Posterior vena cava (tissue), 2 donors: ENCODE measurements at regions of chr9 and their contacts with region 1.

Region 1: DNA sequence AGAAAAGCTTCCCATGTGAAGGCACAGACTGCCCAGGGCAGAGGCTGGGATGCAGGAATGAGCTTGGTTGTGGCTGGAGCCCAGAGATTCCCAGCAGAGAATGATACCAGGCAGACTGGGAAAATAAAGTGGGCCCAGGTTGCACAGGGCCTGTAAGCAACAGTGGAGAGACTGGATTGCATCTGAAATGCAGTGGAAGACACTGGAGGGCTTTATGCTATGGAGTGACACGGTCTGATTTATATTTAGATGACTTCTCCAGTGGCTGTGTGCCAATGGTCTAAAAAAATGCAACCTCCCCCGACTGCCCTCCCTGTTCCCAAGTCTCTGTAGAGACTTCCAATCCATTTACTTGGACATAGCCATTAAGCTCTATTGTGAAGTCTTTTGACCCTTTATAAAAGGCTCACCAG is 951.1 kb upstream of the DMAC1 start:
- DNase-seq: no peak

Region 2: DNA sequence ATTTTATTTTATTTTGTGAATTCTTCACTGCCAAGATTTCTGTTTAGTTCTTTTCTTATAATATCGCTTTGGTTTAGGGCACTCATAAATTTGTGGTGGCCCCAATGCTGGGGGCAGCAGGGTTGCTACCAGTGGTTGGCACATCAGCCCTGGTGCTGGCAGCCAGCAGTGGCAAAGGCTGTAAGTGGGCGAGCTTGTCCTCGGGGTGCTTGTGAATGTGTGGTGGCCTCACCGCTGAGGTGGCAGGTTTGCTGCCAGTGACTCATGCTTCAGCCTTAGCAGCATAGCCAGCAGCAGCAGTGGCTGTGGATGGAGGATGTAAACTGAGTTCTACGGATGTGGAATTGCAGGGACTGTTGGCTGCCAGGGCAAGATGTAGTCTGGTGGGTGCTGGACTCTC is 688.2 kb before region 1 on chr9:
- intact Hi-C with region 1: loop called in 1 of 2 experiments (anchors 10 kb)
- DNase-seq: no peak

Region 3: DNA sequence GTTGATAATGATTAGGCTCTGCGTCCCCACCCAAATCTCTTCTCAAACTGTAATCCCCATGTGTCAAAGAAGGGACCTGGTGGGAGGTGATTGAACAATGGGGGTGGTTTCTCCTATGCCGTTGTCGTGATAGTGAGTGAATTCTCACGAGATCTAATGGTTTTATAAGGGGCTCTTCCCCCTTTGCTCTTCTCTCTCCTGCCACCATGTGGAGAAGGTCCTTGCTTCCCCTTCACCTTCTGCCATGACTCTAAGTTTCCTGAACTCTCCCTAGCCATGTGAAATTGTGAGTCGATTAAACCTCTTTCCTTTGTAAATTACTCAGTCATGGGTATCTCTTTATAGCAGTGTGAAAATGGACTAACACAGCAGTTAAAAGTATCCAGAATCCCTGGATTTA is 235.9 kb before region 1 on chr9:
- intact Hi-C with region 1: no loop called
- DNase-seq: no peak

Region 4: DNA sequence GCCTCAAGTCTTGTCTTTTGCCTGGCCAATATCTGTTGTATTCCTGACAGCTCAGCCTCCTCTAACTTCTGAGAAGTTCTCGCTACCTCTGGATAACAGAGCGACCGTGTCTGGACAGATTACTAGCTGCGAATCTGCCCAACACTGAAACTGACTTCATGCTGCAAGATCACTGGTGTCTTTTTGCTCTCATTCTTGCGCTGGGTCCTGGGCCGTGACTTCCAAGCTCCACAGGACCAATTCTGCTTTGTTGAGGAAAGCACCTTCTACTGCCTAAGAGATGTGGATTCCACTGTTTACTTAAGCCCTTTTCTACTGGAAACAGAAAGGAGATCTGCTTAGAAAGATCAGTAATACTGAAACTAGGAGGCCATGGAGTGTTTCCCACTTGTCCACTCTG is 27.7 kb after region 1 on chr9:
- intact Hi-C with region 1: no loop called
- DNase-seq: no peak